IMR-90 (cell line): ENCODE measurements at regions of chr17 and their contacts with region 1.

Region 1: DNA sequence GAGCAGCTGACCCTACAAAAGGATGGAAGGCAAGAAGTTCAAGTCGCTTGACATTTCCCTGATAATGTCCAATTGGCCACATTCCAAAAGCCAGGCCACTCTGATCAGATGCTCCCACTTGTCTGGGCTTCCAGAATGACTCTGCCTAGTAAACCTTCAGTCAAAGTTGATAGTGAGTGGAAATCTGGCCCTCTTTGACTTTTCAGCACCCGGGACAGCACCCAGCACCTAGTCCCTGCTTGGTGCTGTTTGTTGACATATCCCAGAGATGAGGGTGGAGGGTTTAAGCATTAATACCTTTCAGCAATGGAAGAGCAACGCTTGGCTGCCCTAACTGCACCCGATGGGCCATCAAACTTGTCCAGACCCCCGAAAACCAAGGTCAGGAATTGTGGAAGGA is 131.3 kb downstream of the AIPL1 start:
- DNase-seq: no peak
- ATAC-seq: no peak; the same call in 1 of the 2 replicates
- H3K4me3 ChIP-seq: no peak overlapping the region
- H3K27ac ChIP-seq: no peak overlapping the region
- H3K4me1 ChIP-seq: no peaks in the 10 kb centered on the region
- H3K27me3 ChIP-seq: no peaks in the 10 kb centered on the region
- CTCF ChIP-seq: no peak
- POLR2A ChIP-seq: no peak
- RAD21 ChIP-seq: no peak

Region 2: DNA sequence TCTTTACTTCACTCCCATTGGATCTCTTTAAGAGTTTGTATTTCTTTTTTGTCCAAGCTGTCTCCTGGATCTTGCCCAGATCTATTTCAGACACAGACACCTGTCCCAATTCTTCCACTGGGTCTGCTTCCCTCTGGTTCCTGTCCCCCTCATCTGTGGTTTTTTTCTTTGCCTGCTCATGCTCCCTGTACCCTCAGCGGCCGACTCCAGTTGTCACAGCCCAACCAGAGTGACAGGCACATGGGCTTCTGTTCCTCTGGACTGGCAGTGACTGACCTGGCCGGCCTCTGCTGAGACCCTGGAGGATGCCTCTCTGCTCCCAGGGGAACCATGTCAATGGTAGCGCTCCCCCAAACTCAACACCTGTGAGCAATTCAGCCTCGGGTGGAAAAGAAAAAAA is 90.9 kb before region 1 on chr17:
- CTCF ChIA-PET with region 1: no interaction called
- POLR2A ChIA-PET with region 1: no interaction called
- dilution Hi-C with region 1: no loop called
- in situ Hi-C with region 1: loop called (anchors 25 kb)
- intact Hi-C with region 1: no loop called
- DNase-seq: no peak
- ATAC-seq: no peak
- H3K4me3 ChIP-seq: no peak overlapping the region
- H3K27ac ChIP-seq: no peak overlapping the region
- H3K4me1 ChIP-seq: no peaks in the 10 kb centered on the region
- H3K27me3 ChIP-seq: no peaks in the 10 kb centered on the region
- CTCF ChIP-seq: no peak
- POLR2A ChIP-seq: no peak
- RAD21 ChIP-seq: no peak

Region 3: DNA sequence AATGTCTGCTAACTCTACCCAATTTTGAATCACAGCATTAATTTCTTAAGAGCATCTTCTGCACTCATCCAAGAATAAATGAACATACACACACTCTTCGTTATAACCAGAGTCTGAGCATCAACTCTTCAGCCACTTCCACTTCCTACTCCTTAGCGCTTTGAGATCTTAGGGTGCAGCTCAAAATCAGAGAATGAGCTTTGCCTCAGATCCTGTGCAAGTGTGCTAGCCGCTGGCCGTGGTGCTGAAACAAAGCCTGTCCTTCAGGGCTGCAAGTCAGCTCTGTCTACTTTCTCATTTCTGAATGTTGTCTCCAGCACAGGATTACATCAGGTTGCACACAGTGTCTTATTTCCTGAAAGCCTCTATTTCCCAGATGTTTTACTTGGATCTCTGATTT is 34.2 kb before region 1 on chr17:
- CTCF ChIA-PET with region 1: no interaction called
- POLR2A ChIA-PET with region 1: no interaction called
- dilution Hi-C with region 1: no loop called
- in situ Hi-C with region 1: no loop called
- intact Hi-C with region 1: no loop called
- DNase-seq: peak; percentile 28
- ATAC-seq: peak; percentile 54; the same call in 1 of the 2 replicates
- H3K4me3 ChIP-seq: no peak overlapping the region
- H3K27ac ChIP-seq: no peak overlapping the region
- H3K4me1 ChIP-seq: no peaks in the 10 kb centered on the region
- H3K27me3 ChIP-seq: no peaks in the 10 kb centered on the region
- CTCF ChIP-seq: no peak
- POLR2A ChIP-seq: no peak
- RAD21 ChIP-seq: no peak